ENCODE measurements at regions of chr9 and their contacts with region 1.

Region 1: DNA sequence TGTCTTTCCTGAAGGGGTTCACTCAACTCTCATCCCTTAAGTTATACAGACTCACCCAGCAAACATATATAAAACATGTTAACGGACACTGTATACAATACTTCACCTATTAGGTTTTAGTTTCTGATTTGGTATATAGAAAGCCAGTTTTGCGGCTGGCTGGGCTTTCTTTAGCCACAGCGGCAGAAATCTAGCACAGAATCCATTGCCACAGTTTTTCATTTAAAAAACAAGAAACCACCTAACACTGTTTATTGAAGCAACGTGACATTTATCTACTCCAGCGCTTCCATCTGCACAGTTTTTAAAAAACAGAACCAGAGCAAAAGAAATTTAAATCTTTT is 67.3 kb downstream of the SNX30 start:
- DNase-seq: no peak
- H3K4me3 ChIP-seq: no peak overlapping the region
- H3K27ac ChIP-seq: no peak overlapping the region
- H3K27me3 ChIP-seq: no peaks in the 10 kb centered on the region
- CTCF ChIP-seq: no peak

Region 2: DNA sequence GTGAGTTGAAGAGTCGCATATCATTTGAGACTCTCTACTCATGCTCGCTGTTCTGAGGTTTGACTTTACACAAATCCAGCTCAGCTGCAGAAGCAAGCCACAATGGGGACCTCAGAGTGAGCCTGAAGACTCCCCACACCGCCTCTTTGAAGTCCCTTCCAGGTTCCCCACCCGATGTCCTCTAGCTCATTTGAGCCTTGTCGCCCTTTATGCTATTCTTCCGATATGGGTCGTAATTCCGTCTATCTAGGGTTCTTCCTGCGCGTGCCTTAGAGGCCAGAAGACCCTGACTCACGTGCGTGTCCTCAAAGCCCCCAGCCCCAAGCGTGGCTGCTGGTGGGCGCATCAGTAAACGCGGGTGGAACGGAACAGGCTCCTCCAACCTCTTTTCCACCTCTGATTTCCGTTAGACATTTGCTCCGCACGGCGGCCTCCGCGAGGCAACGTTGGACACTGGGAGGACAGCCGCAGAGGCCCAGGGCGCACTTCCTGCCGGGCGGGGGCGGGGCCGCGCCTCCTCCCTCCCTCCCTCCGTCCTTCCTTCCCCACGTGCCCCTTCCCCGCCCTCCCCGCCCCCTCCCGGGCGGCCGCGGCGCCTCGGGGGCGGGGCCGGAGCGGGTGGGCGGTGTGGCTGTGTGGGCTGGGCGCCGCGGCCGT is 67.6 kb before region 1 on chr9 and contains the start of gene SNX30:
- CTCF ChIA-PET with region 1: interaction called, 12 read pairs
- POLR2A ChIA-PET with region 1: no interaction called
- DNase-seq: peak; percentile 57
- H3K4me3 ChIP-seq: peak within 1 kb of the TSS; percentile 93
- H3K27ac ChIP-seq: peak within 1 kb of the TSS; percentile 71
- H3K27me3 ChIP-seq: no peaks in the 10 kb centered on the region
- CTCF ChIP-seq: peak; percentile 16; the same call in 1 of the 2 replicates
- polyA plus RNA-seq, gene SNX30: 11.5 and 13.1 TPM in 2 replicates